CD14-positive monocyte (primary cell): ENCODE measurements at regions of chr11 and their contacts with region 1.

Region 1: GRCh38 chr11:124673333-124674167 is at the starts of genes SIAE and SPA17:
- DNase-seq: peak; percentile 87 to 92 (median 91)
- H3K4me3 ChIP-seq: peak within 1 kb of the TSS; percentile 73 to 91 (median 78)
- H3K4me3 Mint-ChIP-seq: peak within 1 kb of the TSS; percentile 88 to 93
- H3K27ac ChIP-seq: peak within 1 kb of the TSS; percentile 53 to 84
- H3K27ac Mint-ChIP-seq: peak within 1 kb of the TSS; percentile 92 to 99 (median 97)
- H3K4me1 ChIP-seq: peaks cover 35% of the 10 kb centered on the region in 2 donors
- H3K4me1 Mint-ChIP-seq: peaks cover 38% of the 10 kb centered on the region
- H3K27me3 ChIP-seq: no peaks in the 10 kb centered on the region
- H3K27me3 Mint-ChIP-seq: no peaks in the 10 kb centered on the region
- CTCF ChIP-seq: no peak
- polyA plus RNA-seq, gene SIAE: 6.7 to 8.9 (median 7.8) TPM
- polyA plus RNA-seq, gene SPA17: 0.75 to 6.7 (median 4.2) TPM

Region 2: DNA sequence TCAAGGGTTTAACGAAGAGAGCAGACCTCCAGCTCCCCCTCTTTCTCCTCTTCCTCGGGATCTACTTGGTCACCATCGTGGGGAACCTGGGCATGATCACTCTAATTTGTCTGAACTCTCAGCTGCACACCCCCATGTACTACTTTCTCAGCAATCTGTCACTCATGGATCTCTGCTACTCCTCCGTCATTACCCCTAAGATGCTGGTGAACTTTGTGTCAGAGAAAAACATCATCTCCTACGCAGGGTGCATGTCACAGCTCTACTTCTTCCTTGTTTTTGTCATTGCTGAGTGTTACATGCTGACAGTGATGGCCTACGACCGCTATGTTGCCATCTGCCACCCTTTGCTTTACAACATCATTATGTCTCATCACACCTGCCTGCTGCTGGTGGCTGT is 103.4 kb before region 1 on chr11:
- intact Hi-C with region 1: no loop called
- DNase-seq: no peak
- H3K4me3 ChIP-seq: no peak overlapping the region
- H3K4me3 Mint-ChIP-seq: no peak overlapping the region
- H3K27ac ChIP-seq: no peak overlapping the region
- H3K27ac Mint-ChIP-seq: peak overlapping the region in 2 of 7 donors; percentile 5 to 63
- H3K4me1 ChIP-seq: no peaks in the 10 kb centered on the region
- H3K4me1 Mint-ChIP-seq: no peaks in the 10 kb centered on the region
- H3K27me3 ChIP-seq: no peaks in the 10 kb centered on the region
- H3K27me3 Mint-ChIP-seq: peaks cover 0 to 7% (median 2%) of the 10 kb centered on the region in 3 donors
- CTCF ChIP-seq: no peak

Region 3: GRCh38 chr11:124758317-124759203 is 85.0 kb after region 1 on chr11:
- intact Hi-C with region 1: loop called (anchors 1 kb)
- DNase-seq: peak; percentile 84 to 88 (median 87)
- H3K4me3 ChIP-seq: peak overlapping the region in 1 of 3 experiments; percentile 58
- H3K4me3 Mint-ChIP-seq: peak overlapping the region; percentile 77 to 94
- H3K27ac ChIP-seq: no peak overlapping the region
- H3K27ac Mint-ChIP-seq: peak overlapping the region in 1 of 7 donors; percentile 27
- H3K4me1 ChIP-seq: peaks cover 53 to 62% of the 10 kb centered on the region in 2 donors
- H3K4me1 Mint-ChIP-seq: peaks cover 50% of the 10 kb centered on the region
- H3K27me3 ChIP-seq: peaks cover 29 to 45% of the 10 kb centered on the region in 2 donors
- H3K27me3 Mint-ChIP-seq: peaks cover 50 to 67% (median 54%) of the 10 kb centered on the region in 3 donors
- CTCF ChIP-seq: peak; percentile 87

Region 4: GRCh38 chr11:124800226-124800929 is 126.8 kb after region 1 on chr11 and contains the start of gene MSANTD2:
- intact Hi-C with region 1: loop called (anchors 5 to 10 kb)
- DNase-seq: peak; percentile 65 to 78 (median 66)
- H3K4me3 ChIP-seq: peak within 1 kb of the TSS; percentile 64 to 86 (median 72)
- H3K4me3 Mint-ChIP-seq: peak within 1 kb of the TSS; percentile 92 to 93
- H3K27ac ChIP-seq: peak within 1 kb of the TSS; percentile 58 to 91
- H3K27ac Mint-ChIP-seq: peak within 1 kb of the TSS; percentile 75 to 92 (median 89)
- H3K4me1 ChIP-seq: peaks cover 18 to 22% of the 10 kb centered on the region in 2 donors
- H3K4me1 Mint-ChIP-seq: peaks cover 26% of the 10 kb centered on the region
- H3K27me3 ChIP-seq: peaks cover 11 to 27% of the 10 kb centered on the region in 2 donors
- H3K27me3 Mint-ChIP-seq: peaks cover 22 to 35% (median 34%) of the 10 kb centered on the region in 3 donors
- CTCF ChIP-seq: no peak
- polyA plus RNA-seq, gene MSANTD2: 1.2 to 5.8 (median 1.8) TPM

Region 5: DNA sequence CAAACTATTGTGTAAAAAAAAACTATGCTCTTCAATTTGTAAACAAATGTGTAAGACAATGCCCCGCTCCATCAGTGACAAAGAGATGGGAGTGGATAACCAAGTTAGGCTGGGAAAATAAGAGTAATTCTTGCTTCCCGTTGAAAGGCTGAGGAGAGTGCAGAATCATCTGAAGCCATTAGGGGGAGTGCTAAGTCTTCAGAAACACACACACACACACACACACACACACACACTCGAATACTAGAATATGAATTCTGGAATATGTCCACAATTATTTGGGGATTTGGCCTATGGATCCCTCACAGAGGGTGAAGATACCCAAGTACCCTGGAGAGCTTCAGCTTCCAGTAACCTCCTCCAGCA is 163.9 kb after region 1 on chr11:
- intact Hi-C with region 1: loop called (anchors 2 to 5 kb)
- DNase-seq: peak; percentile 10 to 21 (median 15)
- H3K4me3 ChIP-seq: no peak overlapping the region
- H3K4me3 Mint-ChIP-seq: no peak overlapping the region
- H3K27ac ChIP-seq: no peak overlapping the region
- H3K27ac Mint-ChIP-seq: no peak overlapping the region
- H3K4me1 ChIP-seq: peaks cover 10 to 20% of the 10 kb centered on the region in 2 donors
- H3K4me1 Mint-ChIP-seq: peaks cover 11% of the 10 kb centered on the region
- H3K27me3 ChIP-seq: peaks cover 68 to 70% of the 10 kb centered on the region in 2 donors
- H3K27me3 Mint-ChIP-seq: peaks cover 64 to 81% (median 65%) of the 10 kb centered on the region in 3 donors
- CTCF ChIP-seq: no peak